Aorta (tissue), 5 donors: ENCODE measurements at regions of chr17 and their contacts with region 1.

Region 1: GRCh38 chr17:7856883-7857723 is at the start of gene NAA38:
- DNase-seq: peak; percentile 98 to 99
- ATAC-seq: peak; percentile 95
- H3K4me3 ChIP-seq: peak within 1 kb of the TSS; percentile 33 to 93
- H3K27ac ChIP-seq: peak within 1 kb of the TSS in 1 of 2 donors; percentile 94
- H3K4me1 ChIP-seq: no peaks in the 10 kb centered on the region
- H3K27me3 ChIP-seq: no peaks in the 10 kb centered on the region
- total RNA-seq, gene NAA38: 44.1 to 47.4 TPM

Region 2: DNA sequence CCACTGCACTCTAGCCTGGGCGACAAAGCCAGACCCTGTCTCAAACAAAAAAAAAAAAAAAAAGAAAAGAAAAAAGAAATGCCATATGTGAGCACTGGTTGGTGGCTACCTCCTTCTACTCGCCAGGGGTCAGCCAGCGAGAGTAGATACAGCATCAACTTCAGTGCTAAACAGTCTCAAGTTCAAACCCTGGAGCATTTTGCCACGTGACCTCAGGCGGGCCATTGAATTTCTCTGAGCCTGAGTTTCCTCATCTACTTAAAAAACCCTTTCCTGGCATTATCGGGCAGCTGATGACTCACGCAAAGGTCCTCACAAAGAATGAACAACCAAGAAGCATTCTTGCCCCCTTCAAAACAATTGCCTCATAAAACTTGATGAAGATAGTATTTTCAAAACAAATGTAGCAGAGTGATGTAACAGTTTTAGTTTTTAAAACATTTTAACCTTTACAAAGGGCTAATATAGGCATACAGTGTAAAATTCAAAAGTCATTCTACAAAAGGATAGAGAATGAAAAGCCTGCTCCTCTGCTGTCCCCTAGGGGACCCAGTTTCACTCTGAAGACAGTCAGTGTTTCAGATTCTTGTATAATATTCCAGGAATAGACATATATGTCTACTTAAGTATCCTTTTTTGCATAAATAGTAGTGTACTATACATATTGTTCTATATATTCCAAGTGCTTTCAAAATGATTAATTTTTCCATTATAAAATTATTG is 111.2 kb before region 1 on chr17:
- intact Hi-C with region 1: loop called (anchors 5 to 10 kb)
- DNase-seq: peak; percentile 21 to 55
- ATAC-seq: no peak
- H3K4me3 ChIP-seq: no peak overlapping the region
- H3K27ac ChIP-seq: no peak overlapping the region
- H3K4me1 ChIP-seq: peaks cover 0 to 2% of the 10 kb centered on the region in 2 donors
- H3K27me3 ChIP-seq: no peaks in the 10 kb centered on the region

Region 3: DNA sequence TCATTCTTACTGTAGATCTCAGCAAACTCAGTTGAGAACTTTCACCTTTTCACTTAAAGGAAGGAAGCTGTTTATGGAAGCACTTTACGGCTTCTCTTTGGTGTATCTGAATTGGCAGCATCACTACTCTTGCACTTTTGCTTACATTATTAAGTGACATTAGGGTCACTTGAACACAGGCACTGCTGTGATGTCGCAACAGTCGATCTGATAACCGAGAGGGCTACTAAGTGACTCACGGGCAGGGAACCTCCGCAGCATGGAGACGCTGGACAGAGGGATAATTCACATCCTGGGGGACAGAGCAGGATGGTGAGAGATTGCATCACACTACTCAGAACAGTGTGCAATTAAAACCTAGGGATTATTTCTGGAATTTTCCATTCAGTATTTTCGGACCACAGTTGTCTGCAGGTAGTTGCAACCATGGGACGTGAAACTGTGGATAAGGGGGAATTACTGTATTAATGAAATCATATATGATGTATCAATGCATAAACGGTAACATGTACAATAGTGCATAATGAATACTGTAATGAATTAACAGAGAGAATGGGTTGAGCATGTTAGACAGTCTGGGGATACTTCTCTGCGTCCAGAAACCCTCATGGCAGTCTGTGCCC is 83.0 kb before region 1 on chr17:
- intact Hi-C with region 1: no loop called
- DNase-seq: no peak
- ATAC-seq: no peak
- H3K4me3 ChIP-seq: no peak overlapping the region
- H3K27ac ChIP-seq: no peak overlapping the region
- H3K4me1 ChIP-seq: no peaks in the 10 kb centered on the region
- H3K27me3 ChIP-seq: no peaks in the 10 kb centered on the region

Region 4: DNA sequence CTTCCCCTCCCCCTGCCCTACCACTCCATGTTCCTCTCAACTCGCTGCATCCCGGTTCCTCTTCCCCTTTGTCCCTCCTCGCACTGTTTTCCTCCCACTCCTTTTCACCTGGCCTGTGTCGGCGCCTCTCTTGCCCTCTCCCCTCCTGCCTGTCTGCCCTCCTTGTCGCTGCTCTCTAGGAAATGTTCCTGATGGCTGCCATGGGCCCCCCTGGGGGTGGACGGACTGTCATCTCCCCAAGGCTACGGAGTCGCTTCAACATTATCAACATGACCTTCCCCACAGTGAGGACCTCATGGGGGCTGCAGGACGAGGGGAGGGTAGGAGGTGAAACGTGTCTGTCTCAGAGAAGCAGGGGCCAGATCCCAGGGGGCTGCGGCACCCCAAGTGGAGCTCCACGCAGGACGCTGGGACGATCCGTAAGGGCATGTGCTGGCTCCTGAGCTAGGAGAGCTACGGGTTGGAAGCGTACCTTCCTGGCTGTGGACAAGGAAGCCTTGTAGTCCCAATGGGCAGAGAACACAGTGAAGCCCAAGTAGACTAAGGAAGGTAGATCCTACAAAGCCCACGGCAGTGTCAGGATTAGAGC is 62.9 kb before region 1 on chr17:
- intact Hi-C with region 1: no loop called
- DNase-seq: no peak
- ATAC-seq: no peak
- H3K4me3 ChIP-seq: no peak overlapping the region
- H3K27ac ChIP-seq: no peak overlapping the region
- H3K4me1 ChIP-seq: no peaks in the 10 kb centered on the region
- H3K27me3 ChIP-seq: no peaks in the 10 kb centered on the region

Region 5: DNA sequence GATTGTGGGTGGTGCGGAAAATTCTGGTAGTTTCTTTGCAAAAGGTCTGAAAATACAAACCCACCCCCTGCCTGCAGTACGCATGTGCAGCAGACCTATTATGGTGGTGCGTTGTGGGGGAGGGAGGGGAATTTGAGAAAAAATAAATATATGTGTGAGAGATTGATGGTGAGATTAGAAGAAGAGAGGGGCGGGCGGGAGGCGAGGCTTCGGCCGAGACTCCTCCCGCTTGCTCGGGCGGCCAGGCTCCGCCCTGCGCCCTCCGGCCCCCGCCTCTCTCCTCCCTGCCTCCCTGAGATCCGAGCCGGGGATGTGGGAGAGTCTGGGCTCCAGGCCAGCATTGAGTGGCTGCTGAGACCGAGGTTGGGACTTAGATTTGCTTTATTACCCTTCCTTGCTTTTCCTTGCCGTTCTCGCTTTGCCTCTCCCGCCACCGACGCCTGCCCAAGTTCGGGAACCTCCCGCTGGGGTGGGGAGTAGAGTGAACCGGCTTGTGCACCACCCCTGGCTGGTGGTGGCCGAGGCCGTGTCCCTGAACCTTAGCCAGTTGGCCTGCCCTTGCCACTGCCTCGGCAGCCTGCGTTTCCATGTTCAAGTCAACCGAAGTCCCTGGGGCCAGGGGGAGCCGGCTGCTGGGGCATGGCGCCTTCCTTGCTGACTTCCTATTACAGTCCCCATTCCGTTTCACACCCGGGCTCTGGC is 30.5 kb after region 1 on chr17:
- intact Hi-C with region 1: no loop called
- DNase-seq: peak; percentile 95 to 96
- ATAC-seq: peak; percentile 93
- H3K4me3 ChIP-seq: peak overlapping the region; percentile 0 to 8
- H3K27ac ChIP-seq: peak overlapping the region in 1 of 2 donors; percentile 78
- H3K4me1 ChIP-seq: peaks cover 0 to 3% of the 10 kb centered on the region in 2 donors
- H3K27me3 ChIP-seq: no peaks in the 10 kb centered on the region

Region 6: DNA sequence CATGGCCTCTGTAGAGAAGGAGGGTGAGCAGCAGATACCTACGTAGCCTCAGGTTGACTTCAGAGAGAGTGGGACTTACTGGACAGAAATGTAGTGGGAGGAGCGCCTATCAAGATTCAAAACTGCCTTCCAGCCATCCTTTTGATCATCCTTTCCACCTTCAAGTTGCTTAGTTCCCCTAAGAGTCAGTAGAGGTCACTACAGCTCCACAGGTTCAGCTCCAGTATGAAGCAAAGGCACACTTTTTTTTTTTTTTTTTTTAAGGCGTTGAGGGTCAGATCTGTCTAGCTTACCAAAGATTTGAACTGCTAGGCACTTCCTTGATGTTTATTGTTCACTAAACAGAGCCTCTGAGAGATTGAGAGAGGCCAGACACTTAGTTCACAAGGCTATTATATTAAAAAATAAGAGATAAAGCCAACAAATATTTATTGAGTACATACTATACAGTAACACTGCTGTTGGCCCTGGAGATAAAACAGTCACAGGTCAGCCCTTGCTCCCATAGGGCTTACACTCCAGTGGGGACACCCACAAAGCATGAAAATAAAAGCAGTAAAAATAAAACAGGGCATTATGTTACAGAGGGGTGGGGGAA is 55.9 kb after region 1 on chr17:
- intact Hi-C with region 1: no loop called
- DNase-seq: peak in 1 of 2 donors; percentile 10
- ATAC-seq: no peak
- H3K4me3 ChIP-seq: no peak overlapping the region
- H3K27ac ChIP-seq: no peak overlapping the region
- H3K4me1 ChIP-seq: no peaks in the 10 kb centered on the region
- H3K27me3 ChIP-seq: no peaks in the 10 kb centered on the region

Region 7: GRCh38 chr17:8057691-8058114 is 200.6 kb after region 1 on chr17:
- intact Hi-C with region 1: loop called in 1 of 2 experiments (anchors 5 kb)
- DNase-seq: peak in 1 of 2 donors; percentile 34
- ATAC-seq: peak; percentile 88
- H3K4me3 ChIP-seq: no peak overlapping the region
- H3K27ac ChIP-seq: no peak overlapping the region
- H3K4me1 ChIP-seq: no peaks in the 10 kb centered on the region
- H3K27me3 ChIP-seq: no peaks in the 10 kb centered on the region